ENCODE measurements at regions of chr1 and their contacts with region 1.

Region 1: DNA sequence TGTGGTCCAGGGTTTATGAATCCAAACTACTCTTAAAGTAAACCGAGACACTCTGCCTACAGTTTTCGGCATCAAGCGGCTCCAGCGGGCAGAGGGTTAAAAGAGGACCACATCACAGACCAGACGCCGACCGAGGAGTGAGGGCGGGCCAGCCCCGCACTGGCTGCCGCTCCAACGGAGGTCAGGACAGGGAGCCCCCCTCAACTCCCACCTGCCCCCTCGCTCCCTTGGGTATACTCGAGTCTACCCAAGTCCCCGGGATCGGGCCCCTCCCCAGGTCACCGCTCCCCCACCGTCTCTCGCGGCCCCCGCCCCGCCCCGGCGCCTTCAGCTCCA is 312 bp downstream of the ARNT start:
- DNase-seq: no peak
- H3K4me3 Mint-ChIP-seq: peak overlapping the region; percentile 86
- H3K27ac Mint-ChIP-seq: peak overlapping the region; percentile 88
- H3K4me1 Mint-ChIP-seq: peaks cover 34% of the 10 kb centered on the region
- H3K27me3 Mint-ChIP-seq: no peaks in the 10 kb centered on the region

Region 2: DNA sequence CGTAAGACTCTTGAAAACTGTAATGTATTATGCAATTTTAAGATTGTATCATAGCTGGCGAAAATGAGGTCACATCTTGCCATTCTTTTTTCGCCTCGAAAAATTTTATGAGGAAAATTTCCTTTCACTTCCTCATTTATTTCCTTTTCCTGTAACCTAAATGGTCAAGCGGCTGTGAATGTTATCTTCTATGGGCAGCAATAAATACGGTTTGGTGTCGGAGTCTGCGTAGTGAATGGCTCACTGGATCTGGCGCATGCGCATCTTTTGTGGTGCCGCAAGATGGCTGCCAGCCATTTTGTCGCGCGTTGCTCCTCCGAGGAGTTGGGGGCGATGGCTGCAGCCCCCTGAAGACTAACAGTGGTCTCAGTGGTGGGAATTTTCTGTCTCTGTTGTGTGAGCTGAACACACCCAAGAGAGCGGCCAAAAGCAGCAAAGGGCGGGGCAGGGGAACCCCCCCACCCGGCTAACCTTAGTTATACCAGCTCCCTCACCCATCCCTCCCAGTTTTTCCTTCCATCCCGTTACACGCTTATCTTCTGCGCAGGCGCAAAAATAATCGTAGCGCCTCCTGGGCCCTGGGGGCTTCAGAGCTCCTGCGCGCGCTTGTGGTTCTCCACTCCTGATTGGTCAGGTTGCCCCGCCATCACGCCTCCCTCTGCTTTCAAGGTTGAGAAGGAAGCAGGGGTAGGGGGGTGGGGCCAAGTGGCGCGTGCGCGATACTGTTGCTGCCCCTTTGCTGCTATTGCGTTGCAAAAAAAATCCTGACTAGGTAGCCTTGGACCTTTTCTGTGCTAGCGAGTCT is 512.5 kb before region 1 on chr1 and contains the start of gene RPRD2:
- intact Hi-C with region 1: loop called (anchors 1 kb)
- DNase-seq: peak; percentile 99
- H3K4me3 Mint-ChIP-seq: peak within 1 kb of the TSS; percentile 99
- H3K27ac Mint-ChIP-seq: peak within 1 kb of the TSS; percentile 97
- H3K4me1 Mint-ChIP-seq: peaks cover 41% of the 10 kb centered on the region
- H3K27me3 Mint-ChIP-seq: no peaks in the 10 kb centered on the region
- total RNA-seq, gene RPRD2: 24.4 and 24.7 TPM in 2 replicates

Region 3: GRCh38 chr1:150578965-150579798 is 296.9 kb before region 1 on chr1 and contains the start of gene MCL1:
- intact Hi-C with region 1: loop called (anchors 1 kb)
- DNase-seq: peak; percentile 92
- H3K4me3 Mint-ChIP-seq: peak within 1 kb of the TSS; percentile 95
- H3K27ac Mint-ChIP-seq: peak within 1 kb of the TSS; percentile 97
- H3K4me1 Mint-ChIP-seq: peaks cover 35% of the 10 kb centered on the region
- H3K27me3 Mint-ChIP-seq: peaks cover 2% of the 10 kb centered on the region
- total RNA-seq, gene MCL1: 311 and 317 TPM in 2 replicates

Region 4: GRCh38 chr1:150841626-150842025 is 34.5 kb before region 1 on chr1:
- intact Hi-C with region 1: loop called (anchors 1 kb)
- DNase-seq: peak; percentile 18
- H3K4me3 Mint-ChIP-seq: peak overlapping the region; percentile 32
- H3K27ac Mint-ChIP-seq: peak overlapping the region; percentile 49
- H3K4me1 Mint-ChIP-seq: peaks cover 31% of the 10 kb centered on the region
- H3K27me3 Mint-ChIP-seq: no peaks in the 10 kb centered on the region

Region 5: DNA sequence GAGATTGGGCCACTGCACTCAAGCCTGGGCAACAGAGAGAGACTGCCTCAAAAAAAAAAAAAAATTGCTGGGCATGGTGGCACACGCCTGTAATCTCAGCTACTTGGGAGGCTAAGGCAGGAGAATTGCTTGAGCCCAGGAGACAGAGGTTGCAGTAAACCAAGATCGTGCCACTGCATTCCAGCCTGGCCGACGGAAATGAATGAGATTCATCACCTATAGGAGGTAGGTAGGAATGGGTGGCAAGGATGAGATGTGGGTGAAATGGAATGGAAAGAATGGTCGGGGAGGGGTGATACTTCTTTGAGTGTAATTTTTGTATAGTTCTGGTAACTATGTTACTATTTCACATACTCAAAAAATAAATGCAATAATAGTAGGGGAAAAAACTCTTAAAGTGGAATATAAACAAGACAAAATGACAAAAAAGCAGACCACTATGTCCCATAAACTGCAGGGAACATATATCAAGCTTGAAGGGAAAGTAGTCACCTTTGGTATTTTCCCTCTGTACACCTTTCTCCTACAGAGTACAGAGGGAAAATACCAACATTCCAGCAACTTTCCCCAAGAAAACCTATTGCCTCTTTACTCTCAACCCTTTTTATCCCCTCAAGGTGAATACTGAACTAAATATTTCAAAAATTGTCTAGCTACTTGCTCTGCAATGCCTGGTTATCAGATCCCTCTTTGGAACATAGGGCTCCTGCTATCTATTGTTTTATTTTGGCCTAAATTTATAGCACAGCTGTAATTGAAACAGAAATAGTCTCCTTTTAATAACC is 26.5 kb after region 1 on chr1:
- intact Hi-C with region 1: no loop called
- DNase-seq: no peak
- H3K4me3 Mint-ChIP-seq: no peak overlapping the region
- H3K27ac Mint-ChIP-seq: no peak overlapping the region
- H3K4me1 Mint-ChIP-seq: peaks cover 10% of the 10 kb centered on the region
- H3K27me3 Mint-ChIP-seq: peaks cover 15% of the 10 kb centered on the region

Region 6: DNA sequence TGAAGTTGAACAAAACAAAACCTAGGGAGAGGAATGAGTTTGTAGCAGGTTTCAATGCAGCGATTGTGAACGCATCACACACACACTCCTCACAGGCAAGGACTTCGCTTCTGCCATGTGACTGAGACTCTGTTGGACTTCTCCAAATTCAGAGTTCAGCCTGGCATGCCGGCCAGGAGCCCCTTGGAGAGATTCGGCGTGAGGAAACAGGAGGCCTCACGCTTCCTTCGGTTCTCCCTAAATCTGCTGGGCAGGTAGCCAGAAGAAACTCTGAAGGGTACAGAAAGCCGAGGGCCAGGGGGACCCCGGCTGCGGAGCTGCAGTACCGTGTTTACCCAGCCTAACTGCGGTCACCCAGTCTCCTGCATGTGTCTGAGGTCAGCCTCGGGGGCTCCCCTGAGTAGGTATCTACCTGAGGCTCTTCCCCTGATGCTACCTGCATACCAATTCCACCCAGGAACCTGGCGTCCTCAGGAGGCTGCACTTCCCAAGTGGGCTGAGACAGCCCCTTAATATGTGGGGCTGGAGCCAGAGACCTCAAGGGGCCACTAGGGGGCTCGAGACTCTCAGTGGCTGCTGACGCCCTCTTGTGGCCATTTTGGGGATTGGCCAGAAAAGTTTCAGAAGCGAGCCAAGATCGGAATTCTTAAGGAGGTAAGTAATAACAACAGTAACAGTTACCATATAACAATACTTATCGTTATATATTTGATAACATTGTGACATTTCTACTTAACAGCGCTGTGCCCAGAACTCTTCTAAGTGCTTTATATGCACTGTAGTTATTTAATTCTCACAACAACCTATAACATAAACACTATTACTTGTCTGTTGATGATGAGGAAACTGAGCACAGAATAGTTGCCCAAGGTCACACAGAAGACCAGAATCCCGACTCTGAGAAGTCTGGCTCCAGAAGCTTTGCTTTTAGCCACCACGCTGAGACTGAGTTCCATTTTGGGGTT is 103.3 kb after region 1 on chr1:
- intact Hi-C with region 1: loop called (anchors 2 kb)
- DNase-seq: peak; percentile 80
- H3K4me3 Mint-ChIP-seq: no peak overlapping the region
- H3K27ac Mint-ChIP-seq: no peak overlapping the region
- H3K4me1 Mint-ChIP-seq: peaks cover 32% of the 10 kb centered on the region
- H3K27me3 Mint-ChIP-seq: no peaks in the 10 kb centered on the region

Region 7: GRCh38 chr1:151156515-151156819 is 280.4 kb after region 1 on chr1 and contains the start of gene TNFAIP8L2:
- intact Hi-C with region 1: loop called (anchors 1 kb)
- DNase-seq: peak; percentile 72
- H3K4me3 Mint-ChIP-seq: peak within 1 kb of the TSS; percentile 92
- H3K27ac Mint-ChIP-seq: peak within 1 kb of the TSS; percentile 99
- H3K4me1 Mint-ChIP-seq: peaks cover 42% of the 10 kb centered on the region
- H3K27me3 Mint-ChIP-seq: no peaks in the 10 kb centered on the region
- total RNA-seq, gene TNFAIP8L2: 38.0 and 38.5 TPM in 2 replicates